Aorta (tissue), 5 donors: ENCODE measurements at regions of chr7 and their contacts with region 1.

Region 1: DNA sequence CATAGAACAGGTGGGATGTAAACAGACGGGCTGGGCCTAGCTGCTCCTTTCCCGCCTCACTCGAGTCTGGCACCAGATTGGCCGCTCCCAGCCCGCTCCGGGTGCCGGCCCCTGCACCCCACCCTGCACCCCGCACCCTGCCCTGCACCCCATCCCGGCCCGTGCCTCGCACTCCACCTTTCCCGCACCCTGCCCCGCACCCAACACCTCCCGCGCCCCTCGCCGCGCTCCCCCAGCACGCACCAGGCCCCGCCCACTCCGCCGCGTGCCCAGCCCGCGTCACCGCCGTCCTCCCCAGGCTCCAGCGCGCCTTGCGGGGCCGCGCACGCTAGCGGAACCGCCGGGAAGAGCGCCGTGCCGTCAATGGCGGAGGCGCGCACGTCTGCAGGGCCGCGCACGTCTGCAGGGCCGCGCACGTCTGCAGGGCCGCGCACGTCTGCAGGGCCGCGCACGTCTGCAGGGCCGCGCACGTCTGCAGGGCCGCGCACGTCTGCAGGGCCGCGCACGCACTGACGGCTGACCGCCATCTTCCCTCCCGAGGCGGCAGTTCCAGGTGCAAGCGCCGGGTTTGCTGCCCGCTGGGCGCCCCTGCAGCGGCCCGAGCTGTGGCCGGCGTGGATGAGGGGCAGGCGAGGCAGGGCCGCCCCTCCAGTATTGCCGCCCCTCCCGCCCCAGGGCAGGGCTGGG is at the start of gene UBE3C:
- DNase-seq: peak; percentile 95 to 97
- ATAC-seq: peak; percentile 95
- H3K4me3 ChIP-seq: peak within 1 kb of the TSS; percentile 61 to 91
- H3K27ac ChIP-seq: peak within 1 kb of the TSS; percentile 1 to 69
- H3K4me1 ChIP-seq: no peaks in the 10 kb centered on the region
- H3K27me3 ChIP-seq: no peaks in the 10 kb centered on the region
- total RNA-seq, gene UBE3C: 61.0 to 73.0 TPM

Region 2: DNA sequence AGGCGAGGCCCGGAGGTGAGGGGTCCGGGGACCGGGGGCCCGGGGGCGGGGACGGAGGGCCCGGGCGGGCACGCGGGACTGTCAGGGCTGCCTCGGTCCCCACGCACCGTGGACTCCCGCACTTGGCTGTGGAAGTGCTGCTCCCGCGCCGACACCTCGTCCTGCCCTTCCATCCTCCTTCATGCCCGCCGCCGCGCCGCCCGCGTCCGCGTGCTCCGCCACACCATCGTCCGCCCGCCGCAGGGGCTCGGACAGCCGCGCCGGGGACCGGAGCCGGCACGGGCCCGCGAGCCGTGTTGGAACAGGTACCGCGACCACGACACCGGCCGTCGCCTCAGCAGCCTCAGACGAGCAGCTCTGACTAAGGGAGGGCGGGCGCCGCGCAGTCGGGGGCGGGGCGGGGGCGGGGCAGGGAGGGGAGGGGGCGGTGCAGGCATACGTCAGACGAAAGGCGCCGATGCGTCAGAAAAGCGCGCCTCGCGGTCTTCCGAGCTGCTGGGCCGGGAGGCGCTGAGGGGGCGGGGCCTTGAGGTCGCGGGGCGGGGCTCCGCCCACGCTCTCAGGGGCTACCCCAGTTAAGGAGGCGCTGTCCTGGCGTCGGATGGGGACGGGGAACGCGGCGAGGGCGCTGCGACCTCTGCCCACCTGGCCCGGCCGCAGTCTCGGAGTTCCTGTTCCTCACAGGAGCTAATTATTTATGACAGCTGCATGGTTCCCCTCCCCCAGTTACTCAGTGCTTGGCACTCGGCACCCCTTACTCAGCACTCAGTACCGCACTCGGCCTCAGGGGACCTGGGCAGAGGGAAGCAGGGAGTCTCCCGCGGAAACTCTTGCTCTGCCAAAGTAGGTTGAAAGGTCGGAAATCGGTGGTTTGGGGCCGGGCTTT is 245.5 kb before region 1 on chr7 and contains the start of gene LMBR1:
- intact Hi-C with region 1: loop called in 1 of 2 experiments (anchors 5 kb)
- DNase-seq: peak; percentile 94 to 97
- ATAC-seq: peak; percentile 98
- H3K4me3 ChIP-seq: peak within 1 kb of the TSS; percentile 72 to 96
- H3K27ac ChIP-seq: peak within 1 kb of the TSS in 1 of 2 donors; percentile 73
- H3K4me1 ChIP-seq: no peaks in the 10 kb centered on the region
- H3K27me3 ChIP-seq: no peaks in the 10 kb centered on the region
- total RNA-seq, gene LMBR1: 63.1 to 63.8 TPM

Region 3: GRCh38 chr7:156949541-156950380 is 188.8 kb before region 1 on chr7 and contains the start of gene NOM1:
- intact Hi-C with region 1: loop called (anchors 10 kb)
- DNase-seq: peak; percentile 93 to 98
- ATAC-seq: peak; percentile 95
- H3K4me3 ChIP-seq: peak within 1 kb of the TSS; percentile 91 to 93
- H3K27ac ChIP-seq: no peak within 1 kb of the TSS
- H3K4me1 ChIP-seq: peaks cover 2 to 8% of the 10 kb centered on the region in 2 donors
- H3K27me3 ChIP-seq: no peaks in the 10 kb centered on the region
- total RNA-seq, gene NOM1: 19.4 to 23.5 TPM

Region 4: GRCh38 chr7:157329447-157329846 is 190.9 kb after region 1 on chr7:
- intact Hi-C with region 1: no loop called
- DNase-seq: no peak
- ATAC-seq: no peak
- H3K4me3 ChIP-seq: no peak overlapping the region
- H3K27ac ChIP-seq: no peak overlapping the region
- H3K4me1 ChIP-seq: no peaks in the 10 kb centered on the region
- H3K27me3 ChIP-seq: no peaks in the 10 kb centered on the region